ENCODE measurements at regions of chr4 and their contacts with region 1.

Region 1: DNA sequence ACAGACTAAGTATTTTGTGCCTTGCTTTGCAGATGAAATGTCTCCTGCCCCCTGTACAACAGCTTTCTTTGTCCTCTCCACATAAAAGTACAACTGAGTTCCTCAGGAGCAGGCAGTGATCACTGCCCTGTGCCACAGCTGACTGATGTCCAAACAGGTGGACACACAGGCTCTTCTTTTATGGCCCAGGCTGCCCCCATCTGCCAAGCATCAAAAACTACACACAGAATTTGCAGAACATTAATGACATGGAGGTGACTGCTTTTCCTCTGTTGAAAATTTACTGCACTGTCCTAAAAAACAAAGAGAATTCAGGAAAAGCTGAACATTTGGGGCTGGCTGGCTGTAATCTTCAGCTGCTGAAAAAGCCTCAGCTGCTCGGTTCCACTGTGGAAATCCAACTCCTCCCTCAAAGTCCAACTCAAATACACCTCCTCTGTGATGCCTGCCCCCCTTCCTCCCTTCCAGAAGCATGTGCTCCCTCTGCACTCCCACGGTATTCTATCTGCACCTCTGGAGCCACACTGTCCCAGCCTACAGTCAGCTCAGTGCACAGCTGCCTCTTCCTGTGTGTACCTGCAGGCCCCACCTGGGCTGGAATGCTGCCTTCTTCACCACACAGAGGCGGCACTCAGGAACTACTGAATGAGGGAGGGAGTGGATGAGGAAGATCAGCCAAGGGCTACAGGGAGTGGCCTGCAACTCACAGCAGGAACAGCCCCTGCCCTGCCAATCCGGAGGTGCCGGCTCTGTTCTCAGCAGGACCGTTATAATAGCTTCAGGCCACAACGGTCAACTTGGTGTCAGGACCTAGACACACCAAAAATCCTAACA is 10.3 kb downstream of the AFAP1 start:
- DNase-seq: no peak

Region 2: DNA sequence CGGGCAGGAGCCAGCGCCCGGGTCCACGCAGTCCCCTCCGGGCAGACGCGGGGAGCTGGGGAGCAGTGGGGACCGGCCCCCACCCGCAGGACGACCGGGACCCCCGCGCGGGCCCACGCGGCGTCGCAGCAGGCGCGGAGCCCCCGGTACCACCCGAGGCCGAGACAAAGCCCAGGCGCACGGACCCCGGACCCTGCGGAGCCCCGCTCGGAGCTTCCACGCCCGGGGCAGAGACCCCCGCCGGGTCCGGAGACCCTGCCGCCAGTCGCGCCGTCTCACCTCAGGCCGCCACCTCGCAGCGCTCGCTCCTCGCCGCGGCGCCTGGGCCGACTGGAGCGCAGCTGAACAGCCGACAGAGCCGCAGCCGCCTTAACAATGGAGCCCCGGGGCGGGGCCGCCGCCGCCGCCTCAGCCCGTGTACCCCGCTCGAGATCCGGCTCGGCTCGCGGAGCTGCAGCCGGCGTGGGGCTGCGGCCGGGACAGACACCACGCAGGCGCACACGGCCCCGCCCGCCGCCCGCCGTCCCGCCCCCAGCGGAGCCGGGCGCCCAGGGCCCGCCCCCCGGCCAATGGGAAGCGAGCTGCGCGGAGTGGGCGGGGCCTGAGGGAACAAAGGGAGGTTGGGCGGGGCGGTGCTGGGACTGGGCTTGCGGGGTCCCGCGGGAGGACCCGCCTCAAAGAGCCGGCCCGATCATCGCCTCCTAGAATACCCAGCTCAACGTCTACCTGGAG is 10.2 kb after region 1 on chr4 and contains the start of gene AFAP1:
- CTCF ChIA-PET with region 1: interaction called, 4 read pairs
- POLR2A ChIA-PET with region 1: interaction called, 10 read pairs
- DNase-seq: peak; percentile 99

Region 3: GRCh38 chr4:8110071-8110986 is 181.0 kb after region 1 on chr4:
- CTCF ChIA-PET with region 1: no interaction called
- POLR2A ChIA-PET with region 1: no interaction called
- DNase-seq: no peak

Measured in HEK293T (cell line).